A673 (cell line): ENCODE measurements at regions of chr3 and their contacts with region 1.

Region 1: DNA sequence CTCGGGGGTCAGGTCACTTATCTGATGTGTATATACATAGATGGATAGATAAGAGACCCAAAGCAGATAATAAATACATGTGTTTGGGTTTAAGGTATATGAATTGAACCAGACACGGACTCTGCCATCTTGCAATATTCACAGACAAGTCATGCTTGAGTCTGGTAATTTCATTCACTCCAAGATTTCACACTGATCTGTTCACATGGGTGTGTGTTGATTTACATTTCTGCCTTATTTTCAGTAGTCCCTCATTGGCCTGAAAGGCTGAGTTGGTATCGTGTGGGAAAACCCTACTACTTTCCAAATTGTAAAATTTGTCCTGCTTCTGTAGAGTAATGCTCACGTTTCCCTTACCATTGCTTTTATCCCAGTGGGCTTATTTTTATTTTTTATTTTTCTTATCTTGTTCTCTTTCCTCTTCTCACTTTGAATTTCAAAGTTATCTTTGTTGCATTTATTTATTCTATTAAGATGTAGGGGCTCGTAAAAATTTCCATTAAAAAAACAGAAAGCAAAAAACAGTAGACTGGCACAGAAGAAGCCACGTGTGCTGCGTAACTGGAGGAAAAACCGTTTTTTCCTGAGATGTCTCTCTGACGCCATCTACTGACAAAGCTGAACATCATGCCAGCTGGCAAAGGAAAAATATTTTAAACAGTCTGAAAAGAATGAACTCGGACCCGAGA is 10.8 kb upstream of the MFSD1 start:
- DNase-seq: peak; percentile 83
- H3K4me3 ChIP-seq: no peak overlapping the region
- H3K27ac ChIP-seq: no peak overlapping the region
- H3K4me1 ChIP-seq: no peaks in the 10 kb centered on the region
- H3K27me3 ChIP-seq: no peaks in the 10 kb centered on the region
- CTCF ChIP-seq: peak; percentile 88

Region 2: DNA sequence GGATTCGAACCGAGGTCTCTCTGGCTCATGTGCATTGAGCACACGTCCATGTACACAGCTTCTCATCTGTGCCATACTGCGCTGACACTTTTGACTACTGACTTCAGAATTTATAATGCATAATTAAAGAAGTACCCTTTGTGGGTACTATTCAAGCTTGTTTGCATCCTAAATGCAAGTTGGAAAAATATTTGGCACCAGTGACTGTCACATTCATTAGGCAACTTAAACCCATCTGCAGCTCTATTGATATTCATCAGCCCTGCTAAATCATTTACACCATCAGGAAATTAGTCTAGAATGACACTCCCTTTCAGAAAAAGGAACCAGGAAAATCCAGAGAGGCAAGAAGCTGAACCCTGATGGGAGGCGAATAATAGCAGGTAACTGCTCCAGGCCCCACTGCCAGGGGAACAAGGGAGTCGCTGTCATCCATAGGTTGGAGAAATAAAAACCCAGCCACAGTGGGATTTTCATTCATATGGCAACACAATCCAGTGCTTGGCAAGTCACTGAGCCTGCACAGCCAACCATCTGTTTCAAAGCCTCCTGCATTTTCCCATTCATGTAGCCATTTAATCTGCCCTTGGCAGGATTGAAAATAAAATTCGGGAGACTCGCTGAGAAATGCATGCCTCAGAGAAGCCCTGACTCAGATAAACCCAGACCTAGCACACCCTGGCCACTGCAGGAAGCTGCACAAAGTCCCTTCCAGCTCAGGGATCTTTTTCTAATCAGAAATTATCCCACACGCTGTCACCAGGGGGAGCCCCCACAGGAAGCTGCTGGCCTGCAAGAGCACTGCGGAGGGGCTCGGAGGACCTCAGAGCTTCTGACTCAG is 1184.8 kb before region 1 on chr3:
- CTCF ChIA-PET with region 1: no interaction called
- POLR2A ChIA-PET with region 1: no interaction called
- intact Hi-C with region 1: loop called (anchors 10 kb)
- DNase-seq: peak; percentile 78
- H3K4me3 ChIP-seq: no peak overlapping the region
- H3K27ac ChIP-seq: no peak overlapping the region
- H3K4me1 ChIP-seq: peaks cover 3% of the 10 kb centered on the region
- H3K27me3 ChIP-seq: no peaks in the 10 kb centered on the region
- CTCF ChIP-seq: peak; percentile 90

Region 3: DNA sequence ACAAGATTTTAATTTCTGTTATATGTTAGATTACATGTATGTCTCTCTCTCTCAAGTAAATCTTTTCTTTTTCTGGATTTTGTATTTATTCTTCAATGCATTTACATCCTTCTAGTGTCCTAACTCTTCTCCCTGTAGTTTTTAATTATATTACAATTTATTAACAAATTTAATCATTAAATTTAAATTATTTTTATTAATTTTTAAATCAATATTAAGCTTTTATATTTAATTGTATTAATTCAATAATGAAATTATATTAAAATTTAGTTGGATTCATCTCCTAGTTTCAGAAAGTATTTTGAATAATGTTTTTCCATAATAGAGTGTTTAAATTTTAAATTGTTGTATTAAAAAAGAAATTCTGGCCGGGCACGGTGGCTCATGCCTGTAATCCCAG is 190.3 kb before region 1 on chr3:
- CTCF ChIA-PET with region 1: no interaction called
- POLR2A ChIA-PET with region 1: no interaction called
- intact Hi-C with region 1: no loop called
- DNase-seq: no peak
- H3K4me3 ChIP-seq: no peak overlapping the region
- H3K27ac ChIP-seq: no peak overlapping the region
- H3K4me1 ChIP-seq: no peaks in the 10 kb centered on the region
- H3K27me3 ChIP-seq: no peaks in the 10 kb centered on the region
- CTCF ChIP-seq: no peak

Region 4: DNA sequence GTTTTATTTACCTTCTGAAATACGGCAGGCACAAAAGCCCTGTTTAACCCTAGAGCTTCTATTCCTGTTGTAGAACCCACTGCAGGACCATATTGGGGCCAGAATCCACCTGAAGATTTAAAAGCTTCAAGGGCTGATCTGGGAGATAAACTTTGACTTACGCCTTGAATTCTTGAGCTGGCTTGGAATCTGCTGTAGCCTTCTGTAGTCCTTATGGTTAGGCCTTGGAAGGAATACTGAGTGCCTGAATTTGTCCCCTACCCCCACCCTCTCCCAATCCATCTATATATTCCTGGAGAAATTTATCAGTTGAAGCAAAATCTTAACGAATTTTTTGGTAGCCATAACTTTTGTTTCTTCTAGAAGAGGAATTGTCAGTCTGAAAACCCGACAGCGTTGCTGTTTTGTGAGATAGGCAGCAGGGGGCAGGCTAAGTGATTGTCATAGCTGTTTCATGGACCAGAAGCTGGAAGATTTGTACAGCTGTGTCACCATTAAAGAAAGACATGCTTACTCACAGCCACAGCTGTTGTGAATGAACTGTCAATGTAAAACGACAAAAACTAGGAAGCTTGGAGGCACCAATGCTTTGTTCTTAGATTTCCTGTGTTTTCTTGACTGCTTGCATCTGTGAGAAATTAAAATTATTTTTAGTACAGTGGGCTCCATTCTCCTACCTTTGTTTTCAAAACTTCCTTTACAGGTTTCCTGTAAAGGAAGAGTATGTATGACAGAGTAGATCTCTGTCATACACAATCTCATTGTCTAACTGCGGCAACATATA is 131.4 kb before region 1 on chr3:
- CTCF ChIA-PET with region 1: interaction called, 14 read pairs
- POLR2A ChIA-PET with region 1: interaction called, 3 read pairs
- intact Hi-C with region 1: loop called (anchors 1 kb)
- DNase-seq: peak; percentile 76
- H3K4me3 ChIP-seq: no peak overlapping the region
- H3K27ac ChIP-seq: no peak overlapping the region
- H3K4me1 ChIP-seq: no peaks in the 10 kb centered on the region
- H3K27me3 ChIP-seq: no peaks in the 10 kb centered on the region
- CTCF ChIP-seq: peak; percentile 78

Region 5: DNA sequence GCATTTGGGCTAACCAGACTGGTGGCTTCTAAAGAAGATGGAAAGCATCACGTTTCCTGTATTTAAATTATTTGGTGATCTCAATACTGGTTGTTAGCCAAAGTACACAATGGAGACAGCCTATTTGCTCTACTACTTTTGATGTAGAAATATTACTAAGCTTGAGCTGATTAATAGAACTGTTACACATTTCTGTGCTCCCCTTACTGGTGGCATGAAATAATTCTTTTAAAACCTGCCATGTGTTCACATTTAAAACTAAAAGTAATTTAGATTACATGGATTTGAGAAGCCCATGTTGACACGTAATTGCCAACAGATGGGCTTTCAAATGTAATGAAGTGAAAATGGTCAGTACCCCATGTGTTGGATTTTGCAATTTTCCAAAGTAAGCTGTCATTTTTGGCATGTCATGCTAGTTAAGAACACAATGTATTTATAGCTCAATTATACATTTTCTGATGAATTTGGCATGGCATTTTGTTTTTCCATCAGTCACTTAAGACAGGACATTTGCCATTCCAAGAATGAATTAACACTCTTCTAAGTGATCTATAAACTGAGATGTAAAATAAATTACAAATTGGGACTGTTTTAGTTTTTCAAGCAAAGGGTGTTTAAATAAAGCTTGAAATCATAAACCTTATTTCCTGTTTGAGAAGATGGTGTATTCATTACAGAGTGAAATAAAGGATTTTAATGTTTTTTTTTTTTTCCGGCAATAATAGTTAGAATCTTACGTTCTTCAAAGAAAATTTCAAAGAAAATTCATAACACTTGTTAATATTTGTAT is 48.0 kb before region 1 on chr3:
- CTCF ChIA-PET with region 1: no interaction called
- POLR2A ChIA-PET with region 1: no interaction called
- intact Hi-C with region 1: loop called (anchors 5 kb)
- DNase-seq: peak; percentile 69
- H3K4me3 ChIP-seq: no peak overlapping the region
- H3K27ac ChIP-seq: peak overlapping the region; percentile 49
- H3K4me1 ChIP-seq: peaks cover 21% of the 10 kb centered on the region
- H3K27me3 ChIP-seq: no peaks in the 10 kb centered on the region
- CTCF ChIP-seq: no peak

Region 6: GRCh38 chr3:159245871-159246270 is 454.8 kb after region 1 on chr3:
- CTCF ChIA-PET with region 1: no interaction called
- POLR2A ChIA-PET with region 1: no interaction called
- intact Hi-C with region 1: no loop called
- DNase-seq: no peak
- H3K4me3 ChIP-seq: no peak overlapping the region
- H3K27ac ChIP-seq: no peak overlapping the region
- H3K4me1 ChIP-seq: no peaks in the 10 kb centered on the region
- H3K27me3 ChIP-seq: no peaks in the 10 kb centered on the region
- CTCF ChIP-seq: no peak